Dorsolateral prefrontal cortex (tissue), 120 donors: ENCODE measurements at regions of chr5 and their contacts with region 1.

Region 1: GRCh38 chr5:65481635-65482295 is at the start of gene ADAMTS6:
- DNase-seq: peak; percentile 21 to 87 (median 82)
- H3K4me3 ChIP-seq: peak within 1 kb of the TSS; percentile 38 to 80 (median 67)
- H3K27ac ChIP-seq: peak within 1 kb of the TSS; percentile 28 to 94 (median 86)
- H3K27me3 ChIP-seq: peaks cover 0 to 3% (median 0%) of the 10 kb centered on the region in 45 donors
- CTCF ChIP-seq: peak in 7 of 56 donors; percentile 8 to 26 (median 15)
- total RNA-seq, gene ADAMTS6: 0.81 to 7.2 (median 2.9) TPM

Region 2: DNA sequence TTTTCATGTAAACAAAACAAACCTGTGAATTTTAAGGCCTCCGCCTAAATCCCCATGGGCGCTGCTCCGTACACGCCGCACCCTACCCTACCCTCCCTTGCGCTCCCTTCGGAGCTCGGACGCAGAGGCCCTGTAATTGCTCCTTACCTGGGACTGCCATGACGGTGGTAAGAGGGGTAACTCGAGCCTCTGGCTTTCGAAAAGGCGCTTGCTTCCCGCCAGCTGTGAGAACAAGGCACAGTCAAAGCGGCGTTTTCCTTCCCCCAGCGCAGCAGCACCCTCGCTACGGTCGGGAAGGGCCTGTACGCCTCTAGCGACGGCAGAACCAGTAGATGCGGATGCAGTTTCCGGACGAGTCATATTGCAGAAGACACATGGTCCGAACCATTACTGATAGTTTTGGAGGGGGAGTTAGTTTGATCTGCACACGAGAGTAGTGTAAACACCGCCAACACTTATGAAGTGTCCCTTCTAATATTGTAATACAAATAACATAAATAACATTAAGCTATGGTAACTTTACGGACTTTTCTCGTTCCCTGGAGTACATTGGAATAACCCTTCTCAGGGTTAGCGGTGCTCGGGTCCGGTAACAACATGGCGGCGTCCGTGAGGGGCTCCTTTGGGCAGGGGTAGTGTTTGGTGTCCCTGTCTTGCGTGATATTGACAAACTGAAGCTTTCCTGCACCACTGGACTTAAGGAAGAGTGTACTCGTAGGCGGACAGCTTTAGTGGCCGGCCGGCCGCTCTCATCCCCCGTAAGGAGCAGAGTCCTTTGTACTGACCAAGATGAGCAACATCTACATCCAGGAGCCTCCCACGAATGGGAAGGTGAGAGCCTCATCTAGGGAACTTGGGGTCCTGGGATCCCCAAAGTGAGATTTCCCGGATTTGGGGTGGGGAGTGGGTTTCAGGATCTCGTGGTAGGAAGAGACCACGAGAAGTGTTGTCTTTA is 713.1 kb before region 1 on chr5 and contains the starts of genes CWC27 and SREK1IP1:
- intact Hi-C with region 1: loop called in 1 of 2 experiments (anchors 5 kb)
- DNase-seq: peak; percentile 55 to 84 (median 79)
- H3K4me3 ChIP-seq: peak within 1 kb of the TSS; percentile 67 to 99 (median 89)
- H3K27ac ChIP-seq: peak within 1 kb of the TSS; percentile 53 to 96 (median 89)
- H3K27me3 ChIP-seq: no peaks in the 10 kb centered on the region
- CTCF ChIP-seq: peak in 39 of 56 donors; percentile 8 to 61 (median 29)
- total RNA-seq, gene CWC27: 20.1 to 36.7 (median 27.0) TPM
- total RNA-seq, gene SREK1IP1: 8.4 to 22.4 (median 14.4) TPM

Region 3: GRCh38 chr5:64822320-64822719 is 659.4 kb before region 1 on chr5:
- intact Hi-C with region 1: loop called in 1 of 2 experiments (anchors 5 kb)
- DNase-seq: no peak
- H3K4me3 ChIP-seq: no peak overlapping the region
- H3K27ac ChIP-seq: no peak overlapping the region
- H3K27me3 ChIP-seq: no peaks in the 10 kb centered on the region
- CTCF ChIP-seq: no peak

Region 4: GRCh38 chr5:65035211-65036206 is 446.3 kb before region 1 on chr5:
- intact Hi-C with region 1: loop called (anchors 5 kb)
- DNase-seq: peak; percentile 80 to 94 (median 86)
- H3K4me3 ChIP-seq: peak overlapping the region; percentile 49 to 87 (median 73)
- H3K27ac ChIP-seq: peak overlapping the region; percentile 43 to 99 (median 96)
- H3K27me3 ChIP-seq: no peaks in the 10 kb centered on the region
- CTCF ChIP-seq: peak in 43 of 56 donors; percentile 6 to 61 (median 34)

Region 5: GRCh38 chr5:65125591-65126541 is 355.9 kb before region 1 on chr5:
- intact Hi-C with region 1: loop called in 1 of 2 experiments (anchors 5 kb)
- DNase-seq: peak in 9 of 10 donors; percentile 20 to 79 (median 69)
- H3K4me3 ChIP-seq: peak overlapping the region in 52 of 59 donors; percentile 1 to 57 (median 36)
- H3K27ac ChIP-seq: peak overlapping the region in 49 of 59 donors; percentile 3 to 82 (median 61)
- H3K27me3 ChIP-seq: no peaks in the 10 kb centered on the region
- CTCF ChIP-seq: no peak